ENCODE measurements at regions of chr17 and their contacts with region 1.

Region 1: GRCh38 chr17:35170968-35171771 is 23.0 kb downstream of the SLC35G3 start:
- DNase-seq: peak in 1 of 10 donors; percentile 73

Region 2: DNA sequence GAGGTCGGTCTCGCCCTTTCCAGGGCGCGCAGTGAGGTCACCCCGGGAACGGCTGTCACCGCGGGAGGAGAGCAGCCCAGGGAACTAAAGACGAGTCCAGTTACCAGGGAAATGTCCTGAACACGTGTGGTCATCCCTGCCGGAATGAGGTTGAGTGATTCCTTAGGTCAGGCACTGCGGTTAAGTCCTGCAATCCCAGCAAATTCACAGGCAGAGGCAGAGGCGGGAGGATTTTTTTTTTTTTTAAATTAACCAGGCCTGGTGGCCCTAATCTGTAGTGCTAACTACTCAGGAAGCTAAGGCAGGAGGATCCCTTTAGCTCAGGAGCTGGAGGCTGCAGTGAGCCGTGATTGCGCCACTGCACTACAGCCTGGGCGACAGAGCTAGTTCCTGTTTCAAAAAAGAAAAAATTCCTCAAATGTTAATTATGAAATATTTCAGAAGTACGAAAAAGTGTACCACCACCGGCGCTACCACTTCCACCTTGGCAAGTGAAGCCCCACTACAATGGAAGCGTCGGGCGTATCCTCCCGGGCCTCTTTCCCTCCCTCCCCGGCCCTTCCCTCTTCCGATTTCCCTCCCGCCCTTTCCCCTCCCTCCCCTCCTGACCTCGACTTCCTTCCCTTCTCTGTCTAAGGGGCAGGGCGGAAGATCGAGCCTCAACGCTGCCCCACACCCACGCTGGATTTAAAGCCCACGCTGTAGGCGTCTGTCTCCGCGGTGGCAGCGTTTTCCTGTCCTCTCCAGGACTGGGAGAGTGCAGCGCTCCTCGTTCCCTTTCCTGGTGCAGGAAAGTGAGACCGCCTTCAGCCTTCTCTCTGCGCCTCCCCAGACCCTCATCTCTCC is 175.0 kb after region 1 on chr17:
- intact Hi-C with region 1: no loop called
- DNase-seq: peak in 5 of 10 donors; percentile 11 to 84 (median 25)

Region 3: GRCh38 chr17:35537601-35538141 is 366.5 kb after region 1 on chr17 and contains the start of gene SLFN12L:
- intact Hi-C with region 1: loop called (anchors 5 kb)
- DNase-seq: no peak